Aorta (tissue), 5 donors: ENCODE measurements at regions of chr12 and their contacts with region 1.

Region 1: DNA sequence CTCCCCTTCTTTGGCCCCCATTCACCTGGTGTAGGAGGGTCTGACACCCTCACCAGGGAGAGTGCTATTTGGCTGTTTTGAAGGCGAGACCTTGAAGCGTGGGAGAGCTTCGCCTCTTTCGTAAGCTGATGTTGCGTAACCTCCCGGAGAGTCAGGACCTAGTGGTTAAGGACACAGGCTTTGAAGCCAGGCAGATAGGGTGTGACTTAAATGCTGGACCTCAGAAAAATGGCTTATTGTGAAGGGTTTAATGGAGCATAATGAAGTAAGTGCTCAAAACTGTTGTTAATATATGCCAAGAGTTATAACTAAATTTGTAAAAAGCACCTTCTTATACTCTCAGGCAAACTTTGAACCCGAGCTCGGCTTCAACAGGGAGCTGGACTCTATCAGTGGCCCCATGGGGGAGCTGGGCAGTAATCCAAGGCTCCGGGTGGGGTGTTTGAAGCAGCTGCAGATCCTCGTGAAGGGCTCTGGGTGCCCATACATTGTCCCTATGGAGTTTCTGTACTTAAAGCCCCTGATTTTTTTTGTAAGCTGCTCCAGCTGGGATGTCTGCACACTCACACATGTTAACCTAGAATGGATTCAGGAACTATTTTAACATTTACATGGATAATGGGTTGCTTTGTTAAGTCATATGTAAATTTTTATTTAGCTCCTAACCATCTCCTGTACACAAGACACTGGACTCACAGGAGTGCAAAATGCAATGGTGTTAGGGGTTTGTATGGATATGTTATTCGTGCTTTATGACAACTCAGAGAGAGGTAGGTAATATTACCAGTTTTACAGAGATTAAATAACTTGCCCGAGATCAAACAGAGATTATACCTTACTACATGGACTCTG is 26.0 kb downstream of the PPFIBP1 start:
- DNase-seq: peak; percentile 85 to 86
- ATAC-seq: peak; percentile 88
- H3K4me3 ChIP-seq: no peak overlapping the region
- H3K27ac ChIP-seq: peak overlapping the region; percentile 31 to 75
- H3K4me1 ChIP-seq: peaks cover 7 to 21% of the 10 kb centered on the region in 2 donors
- H3K27me3 ChIP-seq: no peaks in the 10 kb centered on the region

Region 2: DNA sequence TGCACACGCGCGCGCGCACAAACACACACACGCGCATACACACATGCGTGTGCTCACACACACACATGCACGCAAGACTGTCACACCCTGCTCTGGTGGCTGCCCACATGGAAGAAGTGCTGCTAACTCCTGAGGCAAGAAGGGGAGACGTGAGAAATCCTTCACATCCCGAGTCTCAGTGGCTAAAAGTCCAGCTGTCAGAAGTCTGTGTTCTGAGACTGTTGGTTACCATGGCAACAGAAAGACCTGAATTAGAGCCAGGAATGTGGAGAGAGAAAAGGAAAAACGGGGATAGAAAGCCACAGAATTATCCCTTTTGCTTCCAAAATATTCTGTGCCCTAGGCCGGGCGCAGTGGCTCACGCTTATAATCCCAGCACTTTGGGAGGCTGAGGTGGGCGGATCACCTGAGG is 45.2 kb after region 1 on chr12:
- intact Hi-C with region 1: loop called in 1 of 2 experiments (anchors 5 kb)
- DNase-seq: peak in 1 of 2 donors; percentile 60
- ATAC-seq: peak; percentile 70
- H3K4me3 ChIP-seq: no peak overlapping the region
- H3K27ac ChIP-seq: peak overlapping the region; percentile 46 to 96
- H3K4me1 ChIP-seq: peaks cover 2 to 8% of the 10 kb centered on the region in 2 donors
- H3K27me3 ChIP-seq: no peaks in the 10 kb centered on the region

Region 3: DNA sequence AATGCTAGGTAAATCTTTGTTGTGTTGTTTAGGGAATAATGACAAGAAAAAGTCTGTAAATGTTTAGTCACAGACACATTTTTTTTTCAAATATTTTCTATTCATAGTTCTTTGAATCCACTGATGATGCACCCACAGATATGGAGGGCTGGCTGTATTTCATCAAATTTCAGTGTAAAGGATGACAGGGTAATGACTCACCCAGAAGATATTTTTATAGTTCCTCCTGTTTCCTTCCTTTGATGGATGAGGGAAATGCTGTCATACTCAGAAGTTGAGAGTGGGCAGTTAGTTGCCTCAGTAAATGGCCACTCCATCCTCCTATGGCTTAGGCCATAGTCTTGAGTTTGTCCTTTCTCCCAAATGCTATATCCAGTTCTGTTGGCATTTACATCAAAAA is 69.3 kb after region 1 on chr12:
- intact Hi-C with region 1: loop called in 1 of 2 experiments (anchors 5 kb)
- DNase-seq: no peak
- ATAC-seq: peak; percentile 30
- H3K4me3 ChIP-seq: no peak overlapping the region
- H3K27ac ChIP-seq: no peak overlapping the region
- H3K4me1 ChIP-seq: peaks cover 11 to 35% of the 10 kb centered on the region in 2 donors
- H3K27me3 ChIP-seq: no peaks in the 10 kb centered on the region